Panc1 (cell line): ENCODE measurements at regions of chr2 and their contacts with region 1.

Region 1: GRCh38 chr2:171692331-171692730 is 5.1 kb downstream of the DYNC1I2 start:
- DNase-seq: no peak
- ATAC-seq: no peak
- H3K4me3 ChIP-seq: no peak overlapping the region
- H3K27ac ChIP-seq: no peak overlapping the region
- H3K4me1 ChIP-seq: peaks cover 4% of the 10 kb centered on the region; the same call in 1 of the 2 replicates
- H3K27me3 ChIP-seq: no peaks in the 10 kb centered on the region
- CTCF ChIP-seq: no peak

Region 2: GRCh38 chr2:171447675-171448074 is 244.7 kb before region 1 on chr2:
- CTCF ChIA-PET with region 1: no interaction called
- POLR2A ChIA-PET with region 1: no interaction called
- in situ Hi-C with region 1: no loop called
- intact Hi-C with region 1: no loop called
- DNase-seq: no peak
- ATAC-seq: no peak
- H3K4me3 ChIP-seq: no peak overlapping the region
- H3K27ac ChIP-seq: no peak overlapping the region
- H3K4me1 ChIP-seq: no peaks in the 10 kb centered on the region
- H3K27me3 ChIP-seq: no peaks in the 10 kb centered on the region
- CTCF ChIP-seq: peak; percentile 31; the same call in 1 of the 2 replicates

Region 3: DNA sequence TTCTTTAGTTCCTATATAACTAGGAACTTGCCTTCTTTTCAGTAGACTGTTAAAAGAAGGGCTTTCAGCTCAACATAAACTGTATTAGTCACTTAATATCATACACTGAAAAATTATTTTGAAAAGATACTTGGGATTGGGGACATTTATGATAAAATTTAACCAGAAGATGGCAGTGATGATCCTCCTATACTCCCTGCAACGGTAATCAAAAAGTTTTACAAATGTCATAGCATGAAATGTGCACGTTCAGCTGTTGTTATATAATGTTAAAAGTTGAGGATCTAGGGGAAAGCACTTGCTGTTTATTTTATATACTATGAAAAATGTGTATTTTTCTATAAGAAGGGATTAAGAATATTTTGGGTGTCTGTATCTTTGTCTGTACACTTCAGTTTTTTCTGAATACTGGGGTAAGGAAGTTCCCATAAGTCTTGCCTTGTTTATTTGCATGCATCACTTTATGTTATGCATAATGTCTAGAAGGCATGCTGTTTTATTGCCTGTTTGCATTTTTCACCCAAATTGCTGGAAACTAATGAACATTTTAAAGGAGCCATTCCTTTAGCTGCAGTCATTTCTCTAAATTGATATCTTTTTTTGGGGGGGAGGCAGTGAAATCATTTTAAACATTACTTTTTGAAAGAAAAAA is 13.9 kb after region 1 on chr2:
- CTCF ChIA-PET with region 1: interaction called, 12 read pairs
- POLR2A ChIA-PET with region 1: no interaction called
- in situ Hi-C with region 1: no loop called
- intact Hi-C with region 1: no loop called
- DNase-seq: no peak
- ATAC-seq: peak; percentile 63; the same call in 1 of the 2 replicates
- H3K4me3 ChIP-seq: no peak overlapping the region
- H3K27ac ChIP-seq: no peak overlapping the region
- H3K4me1 ChIP-seq: peaks cover 11% of the 10 kb centered on the region; the same call in 1 of the 2 replicates
- H3K27me3 ChIP-seq: no peaks in the 10 kb centered on the region
- CTCF ChIP-seq: peak; percentile 33; the same call in 1 of the 2 replicates

Region 4: GRCh38 chr2:171718720-171719119 is 26.4 kb after region 1 on chr2:
- CTCF ChIA-PET with region 1: no interaction called
- POLR2A ChIA-PET with region 1: no interaction called
- in situ Hi-C with region 1: no loop called
- intact Hi-C with region 1: no loop called
- DNase-seq: no peak
- ATAC-seq: no peak
- H3K4me3 ChIP-seq: no peak overlapping the region
- H3K27ac ChIP-seq: no peak overlapping the region
- H3K4me1 ChIP-seq: peaks cover 3% of the 10 kb centered on the region; the same call in 1 of the 2 replicates
- H3K27me3 ChIP-seq: no peaks in the 10 kb centered on the region
- CTCF ChIP-seq: no peak